Vagina (tissue), 2 donors: ENCODE measurements at regions of chr19 and their contacts with region 1.

Region 1: GRCh38 chr19:4576016-4576933 is 16.8 kb upstream of the SEMA6B start:
- DNase-seq: no peak
- H3K4me3 ChIP-seq: no peak overlapping the region
- H3K27ac ChIP-seq: peak overlapping the region; percentile 30
- H3K4me1 ChIP-seq: peaks cover 20% of the 10 kb centered on the region
- H3K27me3 ChIP-seq: no peaks in the 10 kb centered on the region
- CTCF ChIP-seq: peak in 2 of 3 experiments; percentile 36 to 53
- POLR2A ChIP-seq: no peak

Region 2: DNA sequence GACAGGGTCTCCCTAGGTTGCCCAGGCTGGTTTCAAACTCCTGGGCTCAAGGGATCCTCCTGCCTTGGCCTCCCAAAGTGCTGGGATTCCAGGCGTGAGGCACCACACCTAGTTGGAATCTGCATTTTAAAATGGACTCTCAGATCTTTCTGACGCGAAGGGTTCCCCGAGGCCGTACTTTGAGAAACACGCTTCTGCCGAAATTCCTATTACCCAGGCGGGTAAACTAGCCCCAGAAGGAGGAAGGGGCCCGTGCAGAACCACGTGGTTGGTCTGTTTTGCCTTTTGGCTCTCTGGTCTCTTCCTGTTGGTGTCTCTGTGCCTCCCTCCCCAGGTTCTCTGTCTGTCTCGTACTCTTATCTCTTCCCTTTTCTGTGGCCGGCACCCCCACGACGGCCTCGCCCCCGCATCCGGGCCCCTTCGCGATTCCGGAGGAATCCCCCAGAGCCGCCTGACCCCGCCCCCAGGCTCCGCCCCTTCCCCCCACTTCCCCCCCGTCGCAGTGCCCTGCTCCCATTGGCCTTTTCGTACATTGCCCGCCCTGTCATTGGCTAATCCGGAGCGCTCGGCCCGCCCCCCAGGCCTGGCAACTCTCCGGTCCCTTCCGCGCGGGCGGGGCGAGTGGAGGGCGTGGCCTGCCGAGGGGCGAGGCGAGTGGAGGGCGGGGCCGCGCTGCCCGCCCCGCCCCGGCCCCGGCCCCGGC is 62.7 kb after region 1 on chr19 and contains the start of gene TNFAIP8L1:
- intact Hi-C with region 1: loop called (anchors 5 kb)
- DNase-seq: peak in 1 of 2 donors; percentile 93
- H3K4me3 ChIP-seq: peak within 1 kb of the TSS; percentile 61 to 74
- H3K27ac ChIP-seq: peak within 1 kb of the TSS; percentile 51
- H3K4me1 ChIP-seq: peaks cover 53% of the 10 kb centered on the region
- H3K27me3 ChIP-seq: no peaks in the 10 kb centered on the region
- CTCF ChIP-seq: no peak
- POLR2A ChIP-seq: no peak
- total RNA-seq, gene TNFAIP8L1: 13.0 TPM